ENCODE measurements at regions of chr4 and their contacts with region 1.

Region 1: DNA sequence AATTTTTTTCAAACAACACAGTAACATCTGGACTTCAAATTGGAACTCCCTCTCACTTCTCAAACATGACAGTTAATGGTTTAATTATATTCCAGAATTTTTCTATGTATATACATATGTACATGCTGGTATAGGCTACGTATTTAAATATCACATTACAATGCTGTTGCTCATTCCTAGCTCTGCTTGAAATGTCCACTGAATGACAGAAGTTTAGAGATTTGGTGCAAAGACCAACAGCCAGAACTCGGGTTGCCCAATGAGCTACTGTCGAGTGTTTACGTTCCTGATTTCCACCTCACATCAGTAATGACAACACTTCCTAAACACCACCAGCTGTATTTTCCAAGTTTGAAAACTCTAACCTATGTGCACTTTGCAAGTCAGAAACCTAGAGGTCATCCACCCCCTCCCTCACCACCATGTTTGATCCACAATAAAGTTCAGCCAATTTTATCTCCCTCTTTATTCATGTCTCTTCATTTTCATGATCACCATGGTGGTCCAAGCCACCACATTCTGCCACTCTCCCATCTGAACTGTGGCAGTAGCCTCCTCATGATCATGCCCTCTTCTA is 49.3 kb upstream of the RPL34 start:
- DNase-seq: no peak
- H3K4me3 ChIP-seq: no peak overlapping the region
- H3K27ac ChIP-seq: no peak overlapping the region
- H3K4me1 ChIP-seq: no peaks in the 10 kb centered on the region
- H3K27me3 ChIP-seq: peaks cover 5% of the 10 kb centered on the region
- CTCF ChIP-seq: no peak

Region 2: DNA sequence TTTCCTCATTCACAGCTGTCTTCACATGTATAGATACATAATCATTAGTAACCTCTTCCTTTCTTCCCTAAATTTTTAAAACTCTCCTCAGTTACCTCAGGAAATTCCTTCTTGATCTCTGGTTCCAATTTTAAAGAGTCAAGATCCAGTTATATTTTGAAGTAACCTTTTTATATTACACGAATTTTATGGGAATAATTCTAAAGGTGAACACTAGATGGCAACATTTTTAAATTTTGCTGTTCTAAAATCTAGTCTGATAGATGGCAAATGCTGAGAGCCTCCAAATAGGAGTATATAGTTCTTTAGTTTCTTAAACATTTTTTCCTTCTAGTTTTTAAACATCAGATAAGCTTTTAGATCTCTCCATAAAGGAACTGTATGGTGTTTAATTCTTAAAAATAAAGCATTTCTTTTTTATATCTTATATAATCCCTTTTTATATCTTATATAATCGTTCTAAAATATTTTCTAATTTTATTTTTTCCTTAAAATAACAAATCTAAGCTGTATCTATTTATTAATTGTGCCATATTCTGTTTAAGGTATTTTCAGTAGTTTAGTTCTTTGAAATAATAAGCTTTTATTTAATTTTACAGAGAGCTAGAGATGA is 813.1 kb before region 1 on chr4:
- CTCF ChIA-PET with region 1: no interaction called
- dilution Hi-C with region 1: no loop called
- in situ Hi-C with region 1: no loop called
- intact Hi-C with region 1: loop called (anchors 5 kb)
- DNase-seq: no peak
- H3K4me3 ChIP-seq: no peak overlapping the region
- H3K27ac ChIP-seq: no peak overlapping the region
- H3K4me1 ChIP-seq: no peaks in the 10 kb centered on the region
- H3K27me3 ChIP-seq: no peaks in the 10 kb centered on the region
- CTCF ChIP-seq: peak; percentile 45

Region 3: GRCh38 chr4:108018040-108018883 is 552.8 kb before region 1 on chr4:
- CTCF ChIA-PET with region 1: no interaction called
- dilution Hi-C with region 1: no loop called
- in situ Hi-C with region 1: loop called in 1 of 2 experiments (anchors 10 kb)
- intact Hi-C with region 1: loop called (anchors 1 kb)
- DNase-seq: peak; percentile 54
- H3K4me3 ChIP-seq: no peak overlapping the region
- H3K27ac ChIP-seq: no peak overlapping the region
- H3K4me1 ChIP-seq: no peaks in the 10 kb centered on the region
- H3K27me3 ChIP-seq: no peaks in the 10 kb centered on the region
- CTCF ChIP-seq: peak; percentile 84 to 89

Region 4: GRCh38 chr4:108060164-108060563 is 510.9 kb before region 1 on chr4:
- CTCF ChIA-PET with region 1: interaction called, 3 read pairs
- dilution Hi-C with region 1: no loop called
- in situ Hi-C with region 1: no loop called
- intact Hi-C with region 1: loop called (anchors 1 kb)
- DNase-seq: peak; percentile 22
- H3K4me3 ChIP-seq: no peak overlapping the region
- H3K27ac ChIP-seq: no peak overlapping the region
- H3K4me1 ChIP-seq: peaks cover 9% of the 10 kb centered on the region
- H3K27me3 ChIP-seq: no peaks in the 10 kb centered on the region
- CTCF ChIP-seq: peak; percentile 23 to 41

Region 5: GRCh38 chr4:108492816-108493595 is 78.1 kb before region 1 on chr4:
- CTCF ChIA-PET with region 1: no interaction called
- dilution Hi-C with region 1: no loop called
- in situ Hi-C with region 1: no loop called
- intact Hi-C with region 1: loop called (anchors 5 kb)
- DNase-seq: peak; percentile 39
- H3K4me3 ChIP-seq: no peak overlapping the region
- H3K27ac ChIP-seq: no peak overlapping the region
- H3K4me1 ChIP-seq: no peaks in the 10 kb centered on the region
- H3K27me3 ChIP-seq: peaks cover 11% of the 10 kb centered on the region
- CTCF ChIP-seq: peak; percentile 72 to 89